Right lobe of liver (tissue), 6 donors: ENCODE measurements at regions of chr1 and their contacts with region 1.

Region 1: DNA sequence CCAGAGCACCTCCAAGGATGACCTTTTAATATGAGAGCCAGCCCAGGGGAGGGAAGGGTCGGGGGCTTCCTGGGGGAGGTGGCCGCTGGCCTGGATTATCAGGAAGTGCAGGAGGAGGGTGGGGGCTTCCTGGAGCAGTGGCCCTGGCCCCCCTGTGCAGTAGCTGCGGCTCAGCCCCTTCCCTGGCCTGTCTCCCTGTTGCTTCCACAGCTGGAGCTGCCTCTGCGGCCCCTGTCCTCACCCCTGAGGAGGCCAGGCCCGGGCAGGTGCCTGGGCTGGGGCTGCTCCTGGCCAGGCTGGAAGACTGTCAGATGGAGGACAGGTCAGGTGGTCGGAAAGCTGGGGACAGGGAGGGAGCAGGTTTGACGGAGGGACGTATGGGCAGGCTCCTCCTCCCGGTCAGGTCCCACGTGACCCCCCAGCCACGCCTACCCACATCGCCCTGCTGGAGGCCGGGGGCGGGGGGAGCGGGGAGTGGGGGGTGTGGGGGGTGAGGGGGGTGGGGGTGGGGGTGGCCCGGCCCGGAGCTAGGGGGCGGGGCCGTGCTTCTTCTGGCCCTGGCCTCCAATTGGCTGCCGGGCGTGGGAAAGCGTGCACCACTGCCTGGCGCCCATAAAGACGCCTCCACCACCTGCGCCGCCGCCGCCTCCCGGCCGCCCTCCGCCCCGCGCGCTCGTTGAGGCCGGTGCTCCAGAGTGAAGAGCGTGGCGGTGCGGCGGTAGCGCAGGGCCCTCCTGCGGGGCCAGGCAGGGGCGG is 10.2 kb upstream of the TNFRSF14 start:
- DNase-seq: peak; percentile 94 to 95 (median 94)
- ATAC-seq: peak; percentile 55 to 71 (median 68)
- H3K4me3 ChIP-seq: peak overlapping the region; percentile 48 to 64 (median 61)
- H3K27ac ChIP-seq: peak overlapping the region; percentile 51 to 99 (median 98)
- H3K4me1 ChIP-seq: peaks cover 0 to 29% (median 14%) of the 10 kb centered on the region in 4 donors
- H3K27me3 ChIP-seq: no peaks in the 10 kb centered on the region
- CTCF ChIP-seq: no peak
- POLR2A ChIP-seq: peak; percentile 84

Region 2: GRCh38 chr1:2415801-2416208 is 130.1 kb before region 1 on chr1:
- intact Hi-C with region 1: loop called in 1 of 2 experiments (anchors 5 kb)
- DNase-seq: no peak
- ATAC-seq: no peak
- H3K4me3 ChIP-seq: no peak overlapping the region
- H3K27ac ChIP-seq: no peak overlapping the region
- H3K4me1 ChIP-seq: peaks cover 0 to 20% (median 8%) of the 10 kb centered on the region in 4 donors
- H3K27me3 ChIP-seq: no peaks in the 10 kb centered on the region
- CTCF ChIP-seq: no peak
- POLR2A ChIP-seq: no peak

Region 3: GRCh38 chr1:2494323-2494693 is 51.6 kb before region 1 on chr1:
- intact Hi-C with region 1: no loop called
- DNase-seq: peak; percentile 79 to 86 (median 85)
- ATAC-seq: peak; percentile 76 to 88 (median 84)
- H3K4me3 ChIP-seq: no peak overlapping the region
- H3K27ac ChIP-seq: peak overlapping the region in 2 of 3 donors; percentile 58 to 66
- H3K4me1 ChIP-seq: peaks cover 0 to 13% (median 5%) of the 10 kb centered on the region in 4 donors
- H3K27me3 ChIP-seq: no peaks in the 10 kb centered on the region
- CTCF ChIP-seq: no peak
- POLR2A ChIP-seq: no peak